ENCODE measurements at regions of chr17 and their contacts with region 1.

Region 1: DNA sequence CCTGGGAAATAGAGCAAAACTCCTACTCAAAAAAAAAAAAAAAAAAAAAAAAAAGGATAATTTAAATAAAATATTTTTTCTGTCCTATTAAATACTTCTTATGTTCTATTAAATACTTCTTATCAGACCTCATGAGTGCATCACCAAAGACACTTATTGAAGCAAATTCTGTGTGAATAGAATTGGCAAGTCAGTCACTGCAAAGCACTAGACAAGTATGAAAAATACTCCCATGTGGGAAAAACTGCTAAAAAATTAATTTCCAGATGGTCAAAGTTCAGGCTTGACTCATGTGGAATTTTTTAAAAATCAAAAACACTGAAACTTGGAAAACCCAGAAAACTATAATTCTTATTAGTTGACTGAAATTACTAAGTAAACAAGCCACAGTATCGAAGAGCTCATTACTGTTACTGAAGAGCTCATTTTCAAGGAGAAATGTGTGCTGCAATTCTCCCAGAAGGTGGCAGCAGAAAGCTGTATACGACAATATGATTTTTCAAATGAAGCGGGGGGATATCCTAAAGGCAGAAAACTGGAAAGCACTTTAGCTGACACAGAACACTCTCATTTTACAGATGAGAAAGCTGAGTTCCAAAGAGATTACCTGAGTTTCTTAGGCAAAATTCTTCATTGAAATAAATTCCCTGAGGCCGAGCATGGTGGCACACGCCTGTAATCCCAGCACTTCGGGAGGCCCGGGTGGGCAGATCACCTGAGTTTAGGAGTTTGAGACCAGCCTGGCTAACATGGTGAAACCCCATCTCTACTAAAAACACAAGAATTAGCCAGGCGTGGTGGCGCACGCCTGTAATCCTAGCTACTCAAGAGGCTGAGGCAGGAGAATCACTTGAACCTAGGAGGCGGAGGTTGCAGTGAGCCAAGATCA is 15.9 kb upstream of the FBXO47 start:
- DNase-seq: peak; percentile 65
- H3K4me3 Mint-ChIP-seq: no peak overlapping the region
- H3K27ac Mint-ChIP-seq: no peak overlapping the region
- H3K4me1 Mint-ChIP-seq: peaks cover 7% of the 10 kb centered on the region
- H3K27me3 Mint-ChIP-seq: peaks cover 14% of the 10 kb centered on the region

Region 2: DNA sequence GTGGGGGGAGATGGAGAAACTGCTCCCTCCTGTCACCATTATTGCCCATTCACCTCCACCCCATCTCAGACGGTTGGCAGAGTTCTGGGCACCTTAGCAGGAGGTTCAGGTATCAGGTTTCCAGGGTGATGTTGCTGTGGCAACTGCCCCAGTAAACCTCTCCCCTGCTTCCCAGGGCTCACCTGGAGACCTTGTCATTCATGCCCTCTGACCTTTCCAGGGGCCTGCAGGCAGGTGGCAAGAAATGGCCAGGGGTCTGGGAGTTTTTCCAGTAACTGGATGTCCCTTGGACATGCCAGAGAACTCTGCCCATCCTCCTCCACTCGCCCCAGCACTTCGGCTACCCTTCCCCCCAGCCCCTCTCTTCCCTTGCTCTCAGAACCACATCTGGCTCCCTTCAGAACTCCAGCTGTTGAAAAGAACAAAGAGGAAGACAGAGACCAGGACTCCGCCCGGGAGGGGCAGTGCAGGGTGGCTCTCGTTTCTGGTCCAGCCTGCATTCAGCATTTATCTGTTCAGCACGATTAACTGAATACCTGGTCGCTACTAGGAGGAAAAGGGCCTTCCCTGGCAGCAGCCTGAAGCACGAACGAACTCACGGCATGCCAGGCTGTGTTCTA is 269.5 kb before region 1 on chr17:
- CTCF ChIA-PET with region 1: no interaction called
- DNase-seq: no peak
- H3K4me3 Mint-ChIP-seq: no peak overlapping the region
- H3K27ac Mint-ChIP-seq: peak overlapping the region; percentile 7
- H3K4me1 Mint-ChIP-seq: peaks cover 58% of the 10 kb centered on the region
- H3K27me3 Mint-ChIP-seq: no peaks in the 10 kb centered on the region

Region 3: GRCh38 chr17:38967290-38967738 is 15.8 kb before region 1 on chr17 and contains the start of gene FBXO47:
- CTCF ChIA-PET with region 1: interaction called, 11 read pairs
- DNase-seq: peak; percentile 86
- H3K4me3 Mint-ChIP-seq: peak within 1 kb of the TSS; percentile 62
- H3K27ac Mint-ChIP-seq: peak within 1 kb of the TSS; percentile 55
- H3K4me1 Mint-ChIP-seq: peaks cover 17% of the 10 kb centered on the region
- H3K27me3 Mint-ChIP-seq: peaks cover 16% of the 10 kb centered on the region

Region 4: DNA sequence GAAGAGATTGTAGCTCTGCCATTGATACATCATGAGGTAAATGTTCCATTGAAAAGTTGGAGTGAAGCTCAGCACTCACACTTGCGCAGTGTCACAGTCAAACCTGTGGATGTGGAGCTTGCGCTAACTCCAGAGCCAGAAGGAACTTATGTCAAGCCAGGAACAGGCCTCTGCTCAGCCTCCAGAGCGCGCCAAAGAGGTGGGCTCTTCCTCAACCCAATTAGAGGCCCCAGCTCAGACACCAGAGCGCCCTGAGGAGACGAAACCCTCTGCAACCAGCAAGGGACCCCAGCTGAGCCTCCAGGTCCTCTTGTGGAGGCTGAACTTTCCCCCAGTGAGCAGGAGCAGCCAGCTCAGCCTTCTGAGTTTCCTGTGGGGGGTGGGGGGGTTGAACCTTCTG is 45.6 kb after region 1 on chr17:
- CTCF ChIA-PET with region 1: interaction called, 10 read pairs
- DNase-seq: no peak
- H3K4me3 Mint-ChIP-seq: no peak overlapping the region
- H3K27ac Mint-ChIP-seq: no peak overlapping the region
- H3K4me1 Mint-ChIP-seq: peaks cover 13% of the 10 kb centered on the region
- H3K27me3 Mint-ChIP-seq: peaks cover 67% of the 10 kb centered on the region

Region 5: DNA sequence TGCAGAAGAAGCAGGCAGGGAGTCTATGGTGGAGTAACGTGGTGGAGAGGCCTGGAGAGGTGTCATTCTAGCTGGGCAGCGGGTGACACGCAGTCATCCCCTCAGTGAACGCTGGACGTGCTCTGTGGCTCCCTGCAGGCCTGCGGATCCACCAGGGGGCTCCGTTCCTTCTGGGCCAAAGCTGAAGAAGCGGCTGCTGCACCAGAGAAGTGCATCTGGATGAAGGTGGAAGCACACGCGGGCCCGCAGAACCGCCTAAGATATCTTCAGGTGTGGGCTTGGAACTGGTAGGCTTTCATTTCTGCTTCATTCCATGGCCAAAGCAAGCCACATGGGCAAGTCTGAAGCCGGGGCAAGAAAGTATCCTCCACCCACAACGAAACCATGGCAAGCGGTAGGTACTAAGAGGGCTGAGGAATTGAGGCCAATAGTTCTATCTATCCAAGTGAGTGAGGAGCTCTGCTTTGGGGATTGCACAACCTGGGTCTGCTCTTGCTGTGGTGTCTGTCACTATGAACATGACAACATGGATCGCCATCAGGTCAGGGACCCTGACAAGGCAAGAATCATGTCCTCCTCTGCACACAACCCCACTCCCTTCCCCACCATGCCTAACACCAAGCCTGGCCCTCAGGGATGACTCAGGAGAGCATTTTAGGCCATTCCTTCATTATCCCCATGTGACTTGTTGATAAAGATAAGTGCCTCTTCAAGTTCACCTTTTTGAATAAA is 63.0 kb after region 1 on chr17:
- CTCF ChIA-PET with region 1: no interaction called
- DNase-seq: no peak
- H3K4me3 Mint-ChIP-seq: no peak overlapping the region
- H3K27ac Mint-ChIP-seq: peak overlapping the region; percentile 80
- H3K4me1 Mint-ChIP-seq: peaks cover 3% of the 10 kb centered on the region
- H3K27me3 Mint-ChIP-seq: peaks cover 21% of the 10 kb centered on the region

Region 6: GRCh38 chr17:39094607-39095308 is 111.7 kb after region 1 on chr17:
- CTCF ChIA-PET with region 1: interaction called, 27 read pairs
- DNase-seq: peak; percentile 58
- H3K4me3 Mint-ChIP-seq: peak overlapping the region; percentile 70
- H3K27ac Mint-ChIP-seq: peak overlapping the region; percentile 96
- H3K4me1 Mint-ChIP-seq: peaks cover 90% of the 10 kb centered on the region
- H3K27me3 Mint-ChIP-seq: peaks cover 8% of the 10 kb centered on the region

Region 7: GRCh38 chr17:39153599-39154051 is 170.5 kb after region 1 on chr17:
- CTCF ChIA-PET with region 1: interaction called, 144 read pairs
- DNase-seq: peak; percentile 94
- H3K4me3 Mint-ChIP-seq: peak overlapping the region; percentile 90
- H3K27ac Mint-ChIP-seq: peak overlapping the region; percentile 94
- H3K4me1 Mint-ChIP-seq: peaks cover 38% of the 10 kb centered on the region
- H3K27me3 Mint-ChIP-seq: peaks cover 83% of the 10 kb centered on the region

Region 8: DNA sequence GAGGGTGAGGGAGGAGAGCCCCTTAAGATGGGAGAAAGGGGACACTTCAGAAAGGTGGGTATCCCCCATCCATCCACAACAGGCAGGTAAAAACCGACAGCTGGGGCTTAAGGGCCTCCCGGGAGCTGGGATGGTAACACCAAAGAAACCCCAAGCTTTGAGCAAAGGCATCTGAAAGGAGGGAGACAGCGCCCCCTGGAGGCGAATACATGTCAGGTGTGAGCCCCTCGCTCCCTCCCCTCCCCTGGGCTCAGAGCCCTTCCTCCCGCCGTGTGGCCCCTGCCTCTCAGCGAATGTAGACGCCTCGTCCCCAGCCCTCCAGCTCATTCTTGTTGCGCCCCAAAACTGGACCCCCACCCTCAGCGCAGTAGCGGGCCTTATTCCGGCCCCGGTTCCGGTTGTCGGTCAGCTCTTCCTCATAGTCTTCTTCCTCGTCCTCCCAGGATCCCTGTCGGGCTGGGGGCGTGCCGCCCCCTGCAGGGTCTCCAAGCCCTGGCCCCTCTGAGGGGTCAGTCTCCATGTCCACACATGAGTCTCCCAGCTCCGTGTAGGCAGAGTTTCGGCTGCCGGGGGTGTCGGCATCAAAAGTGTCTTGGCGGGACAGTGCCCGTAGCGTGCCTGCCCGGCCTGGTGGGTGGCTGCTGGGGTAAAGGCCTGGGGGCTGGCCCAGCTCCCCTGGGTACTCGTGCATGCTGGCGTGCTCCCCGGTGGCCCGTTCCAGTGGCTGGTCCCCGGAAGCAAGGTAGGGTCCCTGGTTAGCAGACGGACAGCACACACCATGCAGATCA is 192.0 kb after region 1 on chr17:
- CTCF ChIA-PET with region 1: interaction called, 55 read pairs
- DNase-seq: peak; percentile 86
- H3K4me3 Mint-ChIP-seq: no peak overlapping the region
- H3K27ac Mint-ChIP-seq: peak overlapping the region; percentile 37
- H3K4me1 Mint-ChIP-seq: peaks cover 26% of the 10 kb centered on the region
- H3K27me3 Mint-ChIP-seq: peaks cover 19% of the 10 kb centered on the region

Measured in activated naive CD4-positive, alpha-beta T cell treated with anti-CD3 and anti-CD28 coated beads, Interleukin-2, amount 10 ng/mL, durations not matched to agents 7 days and 5 days (primary cell).